Caco-2 (cell line): ENCODE measurements at regions of chr3 and their contacts with region 1.

Region 1: GRCh38 chr3:51995346-51996163 is at the start of gene RPL29:
- DNase-seq: peak; percentile 93
- H3K4me3 ChIP-seq: peak within 1 kb of the TSS; percentile 60
- H3K4me3 Mint-ChIP-seq: peak within 1 kb of the TSS; percentile 93
- H3K27ac Mint-ChIP-seq: peak within 1 kb of the TSS; percentile 99
- H3K4me1 ChIP-seq: peaks cover 18% of the 10 kb centered on the region
- H3K4me1 Mint-ChIP-seq: peaks cover 9% of the 10 kb centered on the region
- H3K27me3 ChIP-seq: no peaks in the 10 kb centered on the region
- H3K27me3 Mint-ChIP-seq: no peaks in the 10 kb centered on the region
- CTCF ChIP-seq: no peak
- total RNA-seq, gene RPL29: 976 and 995 TPM in 2 replicates

Region 2: DNA sequence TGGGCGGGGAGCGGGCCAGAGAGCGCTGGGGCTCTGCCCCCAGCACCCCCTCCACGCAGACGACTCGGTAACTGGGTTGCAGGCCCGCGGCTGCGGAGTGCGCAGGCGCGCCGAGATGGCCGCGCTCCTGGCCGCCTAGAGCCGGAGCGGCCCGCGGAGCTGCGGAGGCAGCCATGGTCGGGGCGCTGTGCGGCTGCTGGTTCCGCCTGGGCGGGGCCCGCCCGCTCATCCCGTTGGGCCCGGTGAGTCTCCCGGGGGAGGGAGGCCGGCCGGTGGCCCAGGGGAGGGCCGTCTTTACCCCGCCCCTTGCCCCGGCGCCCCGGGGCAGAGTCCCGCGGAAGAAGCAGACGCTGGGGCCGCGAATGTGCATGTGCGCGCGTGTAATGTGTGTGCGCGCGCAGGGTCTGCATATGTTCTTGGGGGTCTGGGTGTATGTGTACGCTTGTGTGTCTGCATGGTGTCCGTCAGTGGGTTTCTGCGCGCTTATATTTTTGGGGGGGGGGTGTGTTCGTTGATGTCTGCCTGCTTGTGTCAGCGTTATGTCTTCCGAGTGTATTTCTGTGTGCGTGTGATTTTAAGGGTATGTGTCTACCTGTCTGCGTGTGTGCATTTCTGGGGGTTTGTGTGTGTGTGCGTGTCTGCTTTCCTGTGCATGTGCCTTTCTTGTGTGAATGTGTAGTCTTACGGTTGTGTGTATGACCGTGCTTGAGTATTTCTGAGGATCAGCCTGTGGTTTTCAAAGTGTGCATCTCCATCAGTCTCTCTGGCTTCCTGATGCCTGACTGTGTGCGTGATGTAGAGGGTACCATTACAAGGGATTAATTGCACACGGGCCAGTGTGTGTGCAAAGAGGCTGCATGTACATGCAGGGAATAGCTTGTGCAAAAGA is 20.3 kb before region 1 on chr3 and contains the start of gene ABHD14A:
- CTCF ChIA-PET with region 1: no interaction called
- POLR2A ChIA-PET with region 1: interaction called, 4 read pairs
- intact Hi-C with region 1: loop called (anchors 2 kb)
- DNase-seq: peak; percentile 80 to 83
- H3K4me3 ChIP-seq: peak within 1 kb of the TSS; percentile 71
- H3K4me3 Mint-ChIP-seq: peak within 1 kb of the TSS; percentile 91
- H3K27ac Mint-ChIP-seq: peak within 1 kb of the TSS; percentile 74
- H3K4me1 ChIP-seq: peaks cover 12% of the 10 kb centered on the region
- H3K4me1 Mint-ChIP-seq: peaks cover 7% of the 10 kb centered on the region
- H3K27me3 ChIP-seq: no peaks in the 10 kb centered on the region
- H3K27me3 Mint-ChIP-seq: no peaks in the 10 kb centered on the region
- CTCF ChIP-seq: no peak
- total RNA-seq, gene ABHD14A: 14.0 and 16.3 TPM in 2 replicates